Dendritic cell treated with granulocyte-macrophage colony-stimulating factor and Interleukin-4, amounts not matched to agents 40 ng/mL and 50 ng/mL, for 4 days (primary cell): ENCODE measurements at regions of chr2 and their contacts with region 1.

Region 1: DNA sequence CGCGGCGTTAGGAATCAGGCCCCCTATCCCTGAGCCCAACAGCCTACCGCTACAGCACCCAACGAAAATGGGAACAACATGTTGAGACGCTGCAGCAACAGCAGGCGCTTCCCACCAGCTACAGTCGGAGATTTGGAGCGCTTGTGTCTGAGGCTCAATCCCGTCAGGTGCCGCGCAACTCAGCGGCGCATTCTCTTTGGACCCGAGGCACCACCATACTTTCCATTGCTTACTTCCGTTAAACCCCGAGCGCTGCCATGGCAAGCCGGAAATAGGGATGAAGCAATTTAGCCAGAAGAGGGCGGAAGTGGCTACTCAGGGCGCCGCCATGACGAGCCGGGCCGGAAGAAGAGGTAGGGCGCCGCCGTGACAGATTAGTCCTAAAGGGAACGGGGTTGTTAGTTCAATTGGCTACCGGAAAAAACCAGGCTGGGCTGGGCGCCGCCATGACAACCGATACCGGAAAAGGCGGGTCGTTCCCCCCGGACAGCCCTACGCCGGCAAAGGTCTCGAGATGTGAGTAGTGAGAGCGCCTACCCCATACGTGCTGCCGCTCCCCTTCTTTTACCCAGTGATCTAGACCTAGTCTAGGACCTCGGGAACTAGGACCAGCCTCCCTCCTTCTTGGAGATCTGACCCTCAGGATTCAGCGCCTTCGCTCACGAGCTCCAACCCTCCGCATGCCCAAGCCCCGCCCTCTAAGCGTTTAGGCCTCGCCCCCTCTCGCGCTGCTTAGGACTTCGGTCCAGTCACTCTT is at the start of gene CHCHD5:
- H3K4me3 Mint-ChIP-seq: peak within 1 kb of the TSS; percentile 92
- H3K27ac Mint-ChIP-seq: peak within 1 kb of the TSS; percentile 95
- H3K4me1 Mint-ChIP-seq: peaks cover 54% of the 10 kb centered on the region
- H3K27me3 Mint-ChIP-seq: no peaks in the 10 kb centered on the region

Region 2: GRCh38 chr2:112121682-112122254 is 462.5 kb before region 1 on chr2:
- intact Hi-C with region 1: loop called (anchors 5 kb)
- H3K4me3 Mint-ChIP-seq: no peak overlapping the region
- H3K27ac Mint-ChIP-seq: no peak overlapping the region
- H3K4me1 Mint-ChIP-seq: no peaks in the 10 kb centered on the region
- H3K27me3 Mint-ChIP-seq: no peaks in the 10 kb centered on the region

Region 3: DNA sequence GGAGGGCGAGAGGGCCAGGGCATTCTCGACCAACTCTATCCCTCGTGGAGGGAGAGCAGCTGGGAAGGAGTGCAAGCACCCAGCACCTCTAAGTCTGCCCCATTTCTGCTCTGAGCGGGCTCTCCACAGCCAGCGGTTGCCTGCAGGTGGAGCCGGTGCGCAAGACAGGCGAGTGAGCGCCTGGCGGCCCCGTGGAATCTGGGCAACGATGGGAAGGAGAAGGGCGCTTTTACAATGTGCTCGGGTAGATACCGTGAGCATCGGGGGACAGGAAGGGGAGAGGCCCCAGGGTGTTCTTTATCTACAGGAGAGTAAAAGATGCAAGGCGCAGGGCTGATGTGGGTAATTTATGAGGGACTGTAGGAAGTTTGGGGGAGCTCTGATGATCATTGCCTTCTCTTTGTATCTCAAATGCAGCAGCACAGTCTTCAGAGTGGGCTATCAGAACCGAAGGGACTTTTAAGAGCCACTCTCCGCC is 103.2 kb before region 1 on chr2:
- intact Hi-C with region 1: loop called (anchors 1 kb)
- H3K4me3 Mint-ChIP-seq: peak overlapping the region; percentile 92
- H3K27ac Mint-ChIP-seq: peak overlapping the region; percentile 92
- H3K4me1 Mint-ChIP-seq: peaks cover 39% of the 10 kb centered on the region
- H3K27me3 Mint-ChIP-seq: peaks cover 6% of the 10 kb centered on the region

Region 4: DNA sequence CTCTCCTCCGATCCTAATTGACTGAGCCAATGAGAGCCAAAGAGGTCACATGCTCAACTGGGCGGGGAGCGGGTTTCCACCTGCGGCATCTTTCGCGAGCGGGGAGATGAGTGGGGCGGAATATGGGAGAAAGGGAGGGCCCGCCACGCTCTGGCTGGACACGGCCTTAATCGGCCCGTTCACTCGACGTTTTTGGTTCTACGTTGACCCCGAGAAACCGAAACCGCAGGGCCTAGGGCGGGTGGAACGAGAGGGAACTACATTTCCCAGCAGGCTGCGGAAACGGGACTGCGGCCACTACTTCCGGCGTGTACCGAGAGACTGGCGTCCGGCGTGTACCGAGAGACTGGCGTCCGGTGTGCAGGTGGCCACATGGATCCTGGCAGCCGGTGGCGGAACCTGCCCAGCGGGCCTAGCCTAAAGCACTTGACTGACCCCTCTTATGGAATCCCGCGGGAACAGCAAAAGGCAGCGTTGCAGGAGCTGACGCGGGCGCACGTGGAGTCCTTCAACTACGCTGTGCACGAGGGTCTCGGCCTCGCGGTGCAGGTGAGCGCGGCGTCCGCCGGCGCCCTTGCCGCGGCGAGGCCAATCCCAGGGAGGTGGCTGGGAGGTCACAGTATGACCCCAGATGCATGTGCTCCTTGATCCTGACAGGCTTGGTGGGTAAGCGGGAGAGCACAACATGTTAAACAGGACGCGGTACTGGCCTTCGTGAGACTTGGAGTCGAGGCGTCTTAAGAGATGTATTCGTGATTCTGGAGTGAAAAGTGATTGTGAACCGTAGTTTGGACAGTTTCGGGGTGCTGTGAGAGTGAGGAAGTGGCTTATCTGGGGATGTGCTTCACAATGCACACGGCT is 42.0 kb before region 1 on chr2 and contains the start of gene POLR1B:
- intact Hi-C with region 1: loop called (anchors 1 kb)
- H3K4me3 Mint-ChIP-seq: no peak within 1 kb of the TSS
- H3K27ac Mint-ChIP-seq: no peak within 1 kb of the TSS
- H3K4me1 Mint-ChIP-seq: peaks cover 11% of the 10 kb centered on the region
- H3K27me3 Mint-ChIP-seq: no peaks in the 10 kb centered on the region

Region 5: GRCh38 chr2:112645310-112646101 is 61.2 kb after region 1 on chr2 and contains the start of gene SLC20A1:
- intact Hi-C with region 1: loop called (anchors 1 kb)
- H3K4me3 Mint-ChIP-seq: peak within 1 kb of the TSS; percentile 82
- H3K27ac Mint-ChIP-seq: peak within 1 kb of the TSS; percentile 86
- H3K4me1 Mint-ChIP-seq: peaks cover 76% of the 10 kb centered on the region
- H3K27me3 Mint-ChIP-seq: no peaks in the 10 kb centered on the region

Region 6: DNA sequence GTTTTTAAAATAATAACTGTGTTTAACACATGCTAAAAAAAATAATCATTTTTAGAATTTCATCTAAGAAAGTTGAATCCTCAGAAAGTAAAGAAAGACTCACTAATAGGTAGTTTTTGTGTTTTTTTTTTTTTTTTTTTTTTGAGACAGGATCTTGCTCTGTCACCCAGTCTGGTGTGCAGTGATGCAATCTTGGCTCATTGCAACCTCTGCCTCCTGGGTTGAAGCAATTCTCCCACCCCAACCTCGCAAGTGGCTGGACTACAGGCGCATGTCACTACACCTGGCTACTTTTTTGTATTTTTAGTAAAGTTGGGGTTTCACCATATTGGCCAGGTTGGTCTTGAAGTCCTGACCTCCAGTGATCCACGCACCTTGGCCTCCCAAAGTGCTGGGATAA is 173.0 kb after region 1 on chr2:
- intact Hi-C with region 1: no loop called
- H3K4me3 Mint-ChIP-seq: no peak overlapping the region
- H3K27ac Mint-ChIP-seq: no peak overlapping the region
- H3K4me1 Mint-ChIP-seq: peaks cover 16% of the 10 kb centered on the region
- H3K27me3 Mint-ChIP-seq: no peaks in the 10 kb centered on the region

Region 7: DNA sequence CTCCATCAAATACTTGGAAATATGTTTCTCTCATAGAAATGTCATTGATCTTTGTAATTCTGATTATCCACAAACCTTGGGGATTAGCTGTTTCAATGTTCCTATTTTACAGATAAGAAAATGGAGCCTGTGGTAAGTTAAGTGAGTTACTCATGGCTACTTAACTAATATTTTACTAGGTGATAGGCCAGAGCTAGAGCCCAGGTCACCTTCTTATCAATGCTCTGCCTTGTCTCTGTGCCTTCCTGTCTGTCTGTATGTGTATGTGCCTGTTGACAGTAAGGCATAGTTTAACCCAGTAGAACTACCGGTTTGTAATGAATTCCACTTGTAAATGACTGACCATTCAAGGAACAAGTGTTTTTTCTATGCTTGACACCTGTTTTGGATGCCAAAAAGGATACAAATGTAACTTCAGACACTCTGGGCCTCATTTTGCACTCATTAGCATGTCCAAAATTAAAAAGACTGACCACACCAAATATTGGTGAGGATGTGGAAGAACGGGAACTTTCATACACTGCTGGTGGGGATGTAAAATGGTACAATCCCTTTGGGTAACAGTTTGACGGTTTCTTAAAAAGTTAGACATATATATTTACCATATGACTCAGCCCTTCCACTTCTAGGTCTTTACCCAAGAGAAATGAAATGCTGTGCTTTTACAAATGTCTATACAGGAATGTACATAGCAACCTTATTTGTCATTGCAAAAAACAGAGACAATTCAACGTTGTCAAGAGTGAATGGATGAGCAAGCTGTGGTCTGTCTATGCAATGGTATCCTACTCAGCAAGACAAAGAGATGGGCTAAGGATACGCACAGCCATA is 219.6 kb after region 1 on chr2:
- intact Hi-C with region 1: no loop called
- H3K4me3 Mint-ChIP-seq: no peak overlapping the region
- H3K27ac Mint-ChIP-seq: no peak overlapping the region
- H3K4me1 Mint-ChIP-seq: peaks cover 15% of the 10 kb centered on the region
- H3K27me3 Mint-ChIP-seq: no peaks in the 10 kb centered on the region

Region 8: DNA sequence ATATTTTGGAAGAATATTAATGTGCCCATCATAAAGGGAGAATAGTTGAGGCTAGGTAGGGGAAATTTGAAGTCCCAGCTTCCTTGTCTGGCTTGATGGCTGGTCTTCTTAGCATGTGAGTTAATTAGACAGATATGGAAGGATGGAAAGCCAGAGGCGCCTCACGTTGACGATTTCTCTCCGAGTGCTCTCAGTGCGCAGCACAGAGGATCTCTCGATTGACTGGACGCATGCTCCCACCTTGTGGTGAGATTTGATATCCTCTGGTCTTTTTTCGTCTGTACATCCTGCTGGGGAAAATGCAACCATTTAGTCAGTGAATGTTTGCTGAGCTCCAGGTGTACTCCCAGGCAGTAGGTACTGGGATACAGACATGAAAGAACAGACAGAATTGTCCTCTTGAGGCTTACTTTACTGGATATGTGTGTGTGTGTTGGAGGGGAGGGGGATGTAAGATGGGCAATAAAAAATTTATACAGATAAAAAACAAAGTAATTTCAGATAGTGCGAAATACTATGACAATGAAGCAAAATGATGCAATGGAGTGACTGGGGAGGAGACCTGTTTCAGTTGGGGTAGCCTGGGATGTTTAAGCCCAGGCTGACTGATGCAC is 786.3 kb after region 1 on chr2:
- intact Hi-C with region 1: no loop called
- H3K4me3 Mint-ChIP-seq: no peak overlapping the region
- H3K27ac Mint-ChIP-seq: no peak overlapping the region
- H3K4me1 Mint-ChIP-seq: peaks cover 55% of the 10 kb centered on the region
- H3K27me3 Mint-ChIP-seq: no peaks in the 10 kb centered on the region